PC-3 (cell line): ENCODE measurements at regions of chr17 and their contacts with region 1.

Region 1: GRCh38 chr17:45428050-45428617 is 4.5 kb downstream of the ARHGAP27 start:
- DNase-seq: peak; percentile 87
- ATAC-seq: peak; percentile 11
- H3K4me3 ChIP-seq: peak overlapping the region; percentile 45; the same call in 1 of the 2 replicates
- H3K27ac ChIP-seq: no peak overlapping the region
- H3K4me1 ChIP-seq: peaks cover 57% of the 10 kb centered on the region
- H3K27me3 ChIP-seq: no peaks in the 10 kb centered on the region
- CTCF ChIP-seq: peak; percentile 97

Region 2: DNA sequence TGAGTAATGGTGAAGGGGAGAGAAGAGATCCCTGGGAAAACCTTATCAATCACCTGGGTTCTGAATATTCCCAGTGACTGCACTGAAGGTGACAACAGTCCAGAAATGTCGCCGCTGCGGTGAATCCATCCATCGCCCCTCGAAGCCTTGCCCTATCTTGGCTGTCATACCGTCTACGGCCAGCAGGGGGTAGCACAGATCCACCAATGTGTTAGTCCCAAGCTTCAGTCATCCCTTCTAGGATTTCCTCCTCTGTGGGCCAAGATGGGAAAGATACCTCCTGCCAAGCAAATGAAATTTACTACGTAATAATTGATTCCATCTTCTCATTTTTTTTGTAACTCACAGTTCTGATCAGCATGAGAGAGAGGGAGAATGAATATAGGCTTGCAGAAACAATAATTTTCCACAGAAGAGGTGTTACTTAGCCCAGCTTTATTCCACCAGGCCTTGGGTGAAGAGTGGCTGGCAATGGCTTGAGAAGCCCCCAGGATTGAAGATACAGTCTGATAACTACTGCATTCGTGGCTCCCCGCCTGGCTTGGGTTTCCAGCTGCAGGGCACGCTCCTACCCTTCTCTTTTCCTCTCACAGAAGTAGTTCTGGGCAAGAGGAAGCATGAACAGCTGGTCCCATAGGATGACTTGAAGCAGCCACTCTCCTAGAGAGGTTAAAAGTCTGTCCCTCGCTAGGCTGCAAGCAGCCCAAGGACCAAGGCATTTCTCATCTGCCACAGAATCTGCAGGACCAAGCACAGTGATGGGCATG is 209.1 kb before region 1 on chr17:
- CTCF ChIA-PET with region 1: interaction called, 12 read pairs
- POLR2A ChIA-PET with region 1: interaction called, 5 read pairs
- intact Hi-C with region 1: no loop called
- DNase-seq: peak; percentile 92
- ATAC-seq: peak; percentile 76
- H3K4me3 ChIP-seq: no peak overlapping the region
- H3K27ac ChIP-seq: no peak overlapping the region
- H3K4me1 ChIP-seq: peaks cover 12% of the 10 kb centered on the region
- H3K27me3 ChIP-seq: no peaks in the 10 kb centered on the region
- CTCF ChIP-seq: peak; percentile 98

Region 3: DNA sequence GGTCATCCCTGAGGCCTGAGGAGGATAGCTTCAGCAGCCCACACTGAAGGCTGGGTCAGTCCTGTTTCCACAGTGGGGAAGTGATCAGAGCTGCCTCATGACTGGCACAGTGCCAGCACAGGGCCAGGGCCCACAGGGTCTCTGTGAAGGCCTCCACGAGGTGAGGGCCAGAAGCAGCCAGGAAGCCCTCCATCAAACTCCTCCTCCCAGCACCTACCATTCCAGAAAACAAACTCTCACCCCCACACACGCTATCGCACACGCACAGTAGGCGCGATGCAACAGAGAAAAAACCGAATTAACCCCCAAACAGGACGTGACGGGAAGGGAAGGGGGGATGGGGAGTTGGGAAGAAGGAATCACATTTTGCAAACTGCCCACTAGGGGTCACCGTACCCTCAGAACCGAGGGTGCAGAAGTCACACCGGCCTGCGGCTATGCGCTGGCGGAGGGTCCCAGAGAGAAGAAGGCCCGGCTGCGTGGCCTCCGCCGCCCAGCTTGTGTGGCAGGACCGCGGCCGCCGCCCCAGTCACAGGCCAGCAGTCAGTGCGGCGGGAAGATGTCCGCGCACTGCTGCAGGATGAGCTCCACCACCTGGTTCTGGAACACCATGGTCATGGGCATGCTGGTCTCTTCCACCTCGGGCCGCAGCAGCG is 33.1 kb before region 1 on chr17:
- CTCF ChIA-PET with region 1: interaction called, 45 read pairs
- POLR2A ChIA-PET with region 1: interaction called, 4 read pairs
- intact Hi-C with region 1: loop called (anchors 1 kb)
- DNase-seq: peak; percentile 61
- ATAC-seq: peak; percentile 43
- H3K4me3 ChIP-seq: no peak overlapping the region
- H3K27ac ChIP-seq: no peak overlapping the region
- H3K4me1 ChIP-seq: no peaks in the 10 kb centered on the region
- H3K27me3 ChIP-seq: no peaks in the 10 kb centered on the region
- CTCF ChIP-seq: peak; percentile 92

Region 4: GRCh38 chr17:45584092-45585036 is 156.2 kb after region 1 on chr17:
- CTCF ChIA-PET with region 1: no interaction called
- POLR2A ChIA-PET with region 1: interaction called, 3 read pairs
- intact Hi-C with region 1: loop called (anchors 2 kb)
- DNase-seq: peak; percentile 91
- ATAC-seq: peak; percentile 66
- H3K4me3 ChIP-seq: peak overlapping the region; percentile 74
- H3K27ac ChIP-seq: peak overlapping the region; percentile 57
- H3K4me1 ChIP-seq: peaks cover 12% of the 10 kb centered on the region
- H3K27me3 ChIP-seq: no peaks in the 10 kb centered on the region
- CTCF ChIP-seq: no peak

Region 5: DNA sequence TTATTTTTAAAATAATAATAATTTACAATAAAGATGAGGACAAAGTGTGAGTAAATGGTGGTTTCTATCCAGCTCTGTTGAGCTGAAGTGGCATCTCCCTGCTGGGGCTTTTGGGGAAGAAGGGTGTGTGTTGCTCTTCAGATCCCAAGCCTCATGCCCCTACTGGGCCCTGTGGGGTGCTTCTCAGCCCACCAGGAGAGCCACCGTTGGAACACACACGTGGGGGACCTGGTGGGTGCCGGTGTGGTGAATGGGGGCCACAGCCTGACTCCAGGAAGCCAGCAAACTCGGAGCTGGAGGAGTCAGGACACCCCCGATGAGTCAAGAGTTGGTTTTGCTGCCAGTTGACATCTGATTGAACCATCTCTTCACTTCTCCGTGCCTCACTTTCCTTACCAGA is 533.1 kb after region 1 on chr17:
- CTCF ChIA-PET with region 1: interaction called, 11 read pairs
- POLR2A ChIA-PET with region 1: no interaction called
- intact Hi-C with region 1: no loop called
- DNase-seq: no peak
- ATAC-seq: no peak
- H3K4me3 ChIP-seq: no peak overlapping the region
- H3K27ac ChIP-seq: no peak overlapping the region
- H3K4me1 ChIP-seq: no peaks in the 10 kb centered on the region
- H3K27me3 ChIP-seq: 0 out of 2 replicates have a peak, but pooled peaks cover 1% of the 10 kb centered on the region
- CTCF ChIP-seq: no peak